CD14-positive monocyte (primary cell): ENCODE measurements at regions of chr3 and their contacts with region 1.

Region 1: DNA sequence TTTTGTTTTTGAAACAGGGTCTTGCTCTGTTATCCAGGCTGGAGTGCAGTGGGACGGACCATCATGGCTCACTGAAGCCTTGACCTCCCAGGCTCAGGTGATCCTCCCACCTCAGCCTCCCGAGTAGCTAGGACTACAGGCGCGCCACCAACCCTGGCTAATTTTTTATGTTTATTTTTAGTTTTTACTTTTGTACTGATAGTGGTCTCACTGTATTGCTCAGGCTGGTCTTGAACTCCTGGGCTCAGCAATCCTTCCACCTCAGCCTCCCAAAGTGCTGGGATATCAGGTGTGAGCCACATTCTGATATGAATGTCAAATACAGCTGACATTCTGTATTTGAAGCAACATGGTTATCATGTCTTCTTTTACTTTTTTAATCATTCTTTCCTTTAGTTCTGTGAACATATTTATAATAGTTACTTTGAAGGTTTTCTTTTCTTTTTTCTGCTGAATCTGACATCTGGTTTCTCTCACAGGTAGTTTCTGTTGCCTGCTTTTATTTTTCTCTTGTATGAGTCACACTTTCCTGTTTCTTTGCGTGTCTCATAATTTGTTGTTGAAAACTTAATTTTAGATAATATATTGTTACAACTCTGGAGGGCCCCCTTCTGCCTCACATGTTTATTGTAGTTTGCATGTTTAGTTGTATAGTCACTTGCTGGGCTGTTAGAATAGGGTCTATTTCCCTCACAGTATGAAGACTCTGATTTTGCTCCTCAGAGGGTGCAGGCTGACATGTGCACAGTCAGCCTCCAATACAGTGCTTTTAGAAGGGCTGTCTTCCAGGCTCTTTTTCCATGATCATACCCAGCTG is 8.4 kb upstream of the CNTN4 start:
- DNase-seq: no peak
- H3K4me3 ChIP-seq: no peak overlapping the region
- H3K4me3 Mint-ChIP-seq: no peak overlapping the region
- H3K27ac ChIP-seq: no peak overlapping the region
- H3K27ac Mint-ChIP-seq: no peak overlapping the region
- H3K4me1 ChIP-seq: no peaks in the 10 kb centered on the region
- H3K4me1 Mint-ChIP-seq: no peaks in the 10 kb centered on the region
- H3K27me3 ChIP-seq: no peaks in the 10 kb centered on the region
- H3K27me3 Mint-ChIP-seq: peaks cover 0 to 2% (median 0%) of the 10 kb centered on the region in 3 donors
- CTCF ChIP-seq: no peak

Region 2: GRCh38 chr3:2036076-2036475 is 54.2 kb before region 1 on chr3:
- intact Hi-C with region 1: loop called in 1 of 2 experiments (anchors 2 kb)
- DNase-seq: no peak
- H3K4me3 ChIP-seq: no peak overlapping the region
- H3K4me3 Mint-ChIP-seq: no peak overlapping the region
- H3K27ac ChIP-seq: no peak overlapping the region
- H3K27ac Mint-ChIP-seq: no peak overlapping the region
- H3K4me1 ChIP-seq: no peaks in the 10 kb centered on the region
- H3K4me1 Mint-ChIP-seq: no peaks in the 10 kb centered on the region
- H3K27me3 ChIP-seq: no peaks in the 10 kb centered on the region
- H3K27me3 Mint-ChIP-seq: no peaks in the 10 kb centered on the region
- CTCF ChIP-seq: no peak